ENCODE measurements at regions of chr20 and their contacts with region 1.

Region 1: GRCh38 chr20:32902456-32903420 is 44.0 kb downstream of the EFCAB8 start:
- DNase-seq: peak; percentile 36
- H3K4me3 ChIP-seq: no peak overlapping the region
- H3K27ac ChIP-seq: no peak overlapping the region
- H3K4me1 ChIP-seq: no peaks in the 10 kb centered on the region
- H3K27me3 ChIP-seq: no peaks in the 10 kb centered on the region
- CTCF ChIP-seq: peak; percentile 86 to 95

Region 2: GRCh38 chr20:32945710-32946221 is 43.0 kb after region 1 on chr20:
- CTCF ChIA-PET with region 1: no interaction called
- dilution Hi-C with region 1: no loop called
- in situ Hi-C with region 1: no loop called
- intact Hi-C with region 1: loop called (anchors 1 kb)
- DNase-seq: peak; percentile 4
- H3K4me3 ChIP-seq: no peak overlapping the region
- H3K27ac ChIP-seq: no peak overlapping the region
- H3K4me1 ChIP-seq: no peaks in the 10 kb centered on the region
- H3K27me3 ChIP-seq: no peaks in the 10 kb centered on the region
- CTCF ChIP-seq: peak; percentile 43 to 73

Region 3: GRCh38 chr20:33005132-33005566 is 102.4 kb after region 1 on chr20:
- CTCF ChIA-PET with region 1: no interaction called
- dilution Hi-C with region 1: no loop called
- in situ Hi-C with region 1: no loop called
- intact Hi-C with region 1: loop called (anchors 10 kb)
- DNase-seq: no peak
- H3K4me3 ChIP-seq: no peak overlapping the region
- H3K27ac ChIP-seq: no peak overlapping the region
- H3K4me1 ChIP-seq: no peaks in the 10 kb centered on the region
- H3K27me3 ChIP-seq: no peaks in the 10 kb centered on the region
- CTCF ChIP-seq: peak; percentile 47 to 50

Region 4: GRCh38 chr20:33097001-33097400 is 194.3 kb after region 1 on chr20:
- CTCF ChIA-PET with region 1: no interaction called
- dilution Hi-C with region 1: no loop called
- in situ Hi-C with region 1: loop called in 1 of 2 experiments (anchors 25 kb)
- intact Hi-C with region 1: loop called (anchors 1 kb)
- DNase-seq: no peak
- H3K4me3 ChIP-seq: no peak overlapping the region
- H3K27ac ChIP-seq: no peak overlapping the region
- H3K4me1 ChIP-seq: no peaks in the 10 kb centered on the region
- H3K27me3 ChIP-seq: no peaks in the 10 kb centered on the region
- CTCF ChIP-seq: no peak

Region 5: GRCh38 chr20:33291830-33292355 is 389.2 kb after region 1 on chr20:
- CTCF ChIA-PET with region 1: no interaction called
- dilution Hi-C with region 1: no loop called
- in situ Hi-C with region 1: no loop called
- intact Hi-C with region 1: loop called (anchors 2 kb)
- DNase-seq: peak; percentile 17
- H3K4me3 ChIP-seq: no peak overlapping the region
- H3K27ac ChIP-seq: no peak overlapping the region
- H3K4me1 ChIP-seq: no peaks in the 10 kb centered on the region
- H3K27me3 ChIP-seq: no peaks in the 10 kb centered on the region
- CTCF ChIP-seq: peak; percentile 94 to 99